Activated B cell treated with CpG ODN at 0.5 μM for 24 hours (primary cell): ENCODE measurements at regions of chr15 and their contacts with region 1.

Region 1: GRCh38 chr15:90031231-90031791 is 30.2 kb downstream of the ZNF710 start:
- DNase-seq: no peak
- ATAC-seq: peak; percentile 91
- H3K4me3 Mint-ChIP-seq: peak overlapping the region; percentile 67
- H3K27ac Mint-ChIP-seq: peak overlapping the region; percentile 76
- H3K4me1 Mint-ChIP-seq: peaks cover 58% of the 10 kb centered on the region
- H3K27me3 Mint-ChIP-seq: no peaks in the 10 kb centered on the region
- CTCF ChIP-seq: no peak

Region 2: GRCh38 chr15:90046911-90047392 is 15.6 kb after region 1 on chr15:
- CTCF ChIA-PET with region 1: no interaction called
- POLR2A ChIA-PET with region 1: interaction called, 26 read pairs
- intact Hi-C with region 1: loop called (anchors 2 kb)
- DNase-seq: peak; percentile 38
- ATAC-seq: peak; percentile 87
- H3K4me3 Mint-ChIP-seq: peak overlapping the region; percentile 55
- H3K27ac Mint-ChIP-seq: peak overlapping the region; percentile 92
- H3K4me1 Mint-ChIP-seq: peaks cover 62% of the 10 kb centered on the region
- H3K27me3 Mint-ChIP-seq: no peaks in the 10 kb centered on the region
- CTCF ChIP-seq: no peak